Panc1 (cell line): ENCODE measurements at regions of chr9 and their contacts with region 1.

Region 1: DNA sequence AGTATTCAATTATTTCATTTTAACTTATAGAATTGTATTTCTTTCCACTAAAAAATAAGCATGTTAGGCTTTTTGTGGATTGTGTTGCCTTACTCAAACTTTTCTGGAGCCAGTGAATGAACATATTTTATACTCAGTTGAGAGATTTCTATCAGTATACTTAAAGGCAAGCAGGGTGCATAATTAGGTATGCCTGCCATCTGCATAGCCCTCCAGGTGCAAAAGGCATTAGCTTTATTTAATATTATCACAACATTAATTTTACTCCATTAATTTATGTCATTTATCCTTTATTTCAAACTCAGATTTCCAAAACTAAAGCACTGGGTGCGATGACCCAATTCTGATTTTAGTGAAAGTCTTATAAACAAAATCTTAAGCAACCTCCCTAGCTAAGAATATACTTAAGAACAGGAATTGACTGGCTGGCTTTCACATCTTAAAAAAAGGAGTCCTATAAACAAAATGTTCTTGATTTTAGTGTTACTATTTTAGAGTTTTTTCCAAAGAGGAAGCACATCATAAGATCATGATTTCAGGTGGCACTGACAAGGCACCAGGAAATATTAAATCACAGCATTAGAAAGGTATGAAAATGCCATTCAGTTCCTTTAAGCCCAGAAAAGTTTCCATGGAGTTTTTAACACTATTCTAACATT is 178.4 kb downstream of the MPDZ start:
- DNase-seq: no peak
- ATAC-seq: no peak
- H3K4me3 ChIP-seq: no peak overlapping the region
- H3K27ac ChIP-seq: no peak overlapping the region
- H3K4me1 ChIP-seq: no peaks in the 10 kb centered on the region
- H3K27me3 ChIP-seq: no peaks in the 10 kb centered on the region
- CTCF ChIP-seq: no peak

Region 2: DNA sequence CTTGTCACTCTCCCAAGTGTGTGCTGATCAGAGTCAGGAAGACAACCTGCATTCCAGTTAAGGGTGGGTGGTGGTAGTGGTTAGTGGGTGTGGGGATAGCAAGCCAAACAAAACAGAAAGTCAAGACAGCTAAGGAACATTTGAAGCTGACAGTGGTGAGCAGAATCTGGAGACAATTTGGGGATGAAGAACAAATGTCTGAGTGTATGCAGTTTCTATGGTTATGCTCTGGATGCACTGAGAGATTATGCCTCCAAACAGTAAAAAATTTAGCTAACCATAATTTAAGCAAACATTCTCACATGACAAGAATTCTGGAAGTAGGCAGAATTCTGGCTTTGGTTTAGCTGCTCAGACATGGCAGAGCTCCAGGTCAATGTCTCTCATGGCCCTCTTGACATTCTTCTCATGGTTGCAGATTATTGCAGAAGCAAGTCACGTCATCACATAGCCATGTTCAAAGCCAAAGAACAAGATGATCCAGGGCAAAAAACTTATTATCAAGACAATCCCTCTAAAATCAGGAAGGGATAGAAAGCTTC is 177.5 kb before region 1 on chr9:
- CTCF ChIA-PET with region 1: no interaction called
- POLR2A ChIA-PET with region 1: interaction called, 10 read pairs
- in situ Hi-C with region 1: no loop called
- intact Hi-C with region 1: no loop called
- DNase-seq: no peak
- ATAC-seq: no peak
- H3K4me3 ChIP-seq: no peak overlapping the region
- H3K27ac ChIP-seq: no peak overlapping the region
- H3K4me1 ChIP-seq: no peaks in the 10 kb centered on the region
- H3K27me3 ChIP-seq: no peaks in the 10 kb centered on the region
- CTCF ChIP-seq: no peak

Region 3: DNA sequence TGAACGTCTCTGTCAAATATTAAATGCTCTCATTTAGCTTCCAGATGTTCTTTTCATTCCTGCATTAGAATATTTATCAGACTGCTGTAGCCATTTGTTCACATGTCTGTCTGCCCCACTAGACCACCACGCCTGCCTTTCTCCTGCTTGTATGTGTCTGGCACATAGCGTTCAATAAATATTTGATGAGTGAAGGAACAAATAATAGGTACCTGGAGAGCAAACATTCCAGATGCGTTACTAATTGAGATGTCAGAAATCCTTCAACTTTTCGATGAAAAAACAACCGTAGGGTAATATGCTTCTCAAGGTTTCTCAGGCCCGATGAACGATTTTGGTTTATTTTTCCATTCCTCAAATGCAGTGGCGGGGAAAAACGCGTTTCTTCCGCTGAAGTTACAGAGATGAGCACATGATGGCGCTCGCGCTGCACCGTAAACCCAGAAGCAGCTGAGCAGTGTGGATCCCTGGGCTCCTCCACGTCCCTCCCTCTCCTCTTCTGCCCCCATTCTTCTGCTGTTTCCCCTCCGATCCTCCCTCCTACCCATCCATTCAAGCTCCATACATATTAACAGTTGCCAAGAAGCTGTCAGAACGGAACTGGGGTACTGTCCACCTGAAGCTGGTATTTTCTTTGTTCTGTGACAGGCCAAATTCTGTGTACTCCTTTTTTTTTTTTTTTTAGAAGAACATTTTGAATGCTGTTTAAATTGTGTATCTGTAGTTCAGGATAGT is 66.9 kb before region 1 on chr9:
- CTCF ChIA-PET with region 1: no interaction called
- POLR2A ChIA-PET with region 1: no interaction called
- in situ Hi-C with region 1: no loop called
- intact Hi-C with region 1: no loop called
- DNase-seq: peak; percentile 24
- ATAC-seq: peak; percentile 83
- H3K4me3 ChIP-seq: peak overlapping the region in 1 of 2 experiments; percentile 36; a peak in 2 of 4 replicates
- H3K27ac ChIP-seq: no peak overlapping the region
- H3K4me1 ChIP-seq: no peaks in the 10 kb centered on the region
- H3K27me3 ChIP-seq: no peaks in the 10 kb centered on the region
- CTCF ChIP-seq: peak; percentile 64